Right ventricle myocardium inferior (tissue), 1 donor: ENCODE measurements at regions of chr2 and their contacts with region 1.

Region 1: GRCh38 chr2:144516981-144517865 is 2.7 kb downstream of the ZEB2 start:
- DNase-seq: peak; percentile 83
- ATAC-seq: peak; percentile 40

Region 2: DNA sequence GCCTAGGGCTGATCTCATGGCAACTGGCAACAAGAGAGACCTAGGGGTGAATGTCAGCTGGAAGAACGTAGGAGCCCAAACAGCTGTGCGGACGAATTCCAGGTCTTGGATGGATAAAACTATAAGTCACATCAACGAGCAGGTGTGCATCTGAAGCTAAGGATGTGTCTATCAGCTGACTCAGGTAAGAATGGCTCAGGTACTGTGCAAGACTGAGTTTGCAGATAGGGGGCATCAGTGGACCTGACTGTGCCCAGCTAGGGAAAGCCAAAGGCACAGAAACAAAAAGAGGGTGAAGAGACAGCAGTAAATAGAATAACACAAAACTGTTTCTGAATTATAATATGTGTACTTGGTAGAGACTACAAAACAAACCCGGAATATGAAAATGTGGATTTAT is 354.6 kb before region 1 on chr2:
- intact Hi-C with region 1: loop called (anchors 5 kb)
- DNase-seq: no peak
- ATAC-seq: no peak

Region 3: GRCh38 chr2:144456680-144457079 is 60.5 kb before region 1 on chr2:
- intact Hi-C with region 1: loop called (anchors 2 kb)
- DNase-seq: no peak
- ATAC-seq: peak; percentile 80

Region 4: GRCh38 chr2:144937910-144938709 is 420.9 kb after region 1 on chr2:
- intact Hi-C with region 1: loop called (anchors 5 kb)
- DNase-seq: no peak
- ATAC-seq: peak; percentile 87

Region 5: DNA sequence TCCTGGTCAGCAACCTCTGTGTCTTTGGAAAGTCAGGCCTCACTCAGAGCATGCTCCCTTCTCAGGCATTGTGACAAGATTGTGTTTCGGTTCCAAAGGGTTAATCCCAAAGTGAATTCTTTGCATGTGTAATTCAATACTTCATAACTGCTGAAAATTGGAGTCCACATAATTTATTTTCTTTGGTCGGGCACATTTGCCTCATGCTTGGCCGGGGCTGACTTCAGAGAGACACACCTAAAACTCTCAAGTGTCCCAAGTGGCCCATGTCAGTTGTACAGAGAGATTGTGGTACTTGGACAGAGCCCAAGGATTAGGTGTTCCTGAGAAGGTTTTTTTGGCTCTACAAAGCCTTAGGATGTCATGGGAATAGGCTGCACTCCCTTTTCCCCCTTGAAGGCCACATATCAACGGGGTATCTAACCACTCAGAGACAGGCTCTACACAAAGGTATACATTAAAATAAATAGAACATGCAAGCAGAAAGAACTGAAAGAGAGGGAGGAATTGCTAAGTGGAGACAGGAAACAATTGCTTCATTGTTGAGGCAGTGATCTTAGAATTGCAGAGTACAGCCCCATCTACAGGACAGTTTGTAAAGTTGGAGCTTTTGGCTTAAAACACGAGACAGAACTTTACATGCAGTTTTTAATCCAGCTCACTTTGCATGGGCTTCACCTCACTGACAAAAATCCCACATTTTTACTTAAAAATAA is 1235.0 kb after region 1 on chr2:
- intact Hi-C with region 1: loop called (anchors 5 kb)
- DNase-seq: peak; percentile 48
- ATAC-seq: peak; percentile 77